Gastrocnemius medialis (tissue), 4 donors: ENCODE measurements at regions of chr17 and their contacts with region 1.

Region 1: DNA sequence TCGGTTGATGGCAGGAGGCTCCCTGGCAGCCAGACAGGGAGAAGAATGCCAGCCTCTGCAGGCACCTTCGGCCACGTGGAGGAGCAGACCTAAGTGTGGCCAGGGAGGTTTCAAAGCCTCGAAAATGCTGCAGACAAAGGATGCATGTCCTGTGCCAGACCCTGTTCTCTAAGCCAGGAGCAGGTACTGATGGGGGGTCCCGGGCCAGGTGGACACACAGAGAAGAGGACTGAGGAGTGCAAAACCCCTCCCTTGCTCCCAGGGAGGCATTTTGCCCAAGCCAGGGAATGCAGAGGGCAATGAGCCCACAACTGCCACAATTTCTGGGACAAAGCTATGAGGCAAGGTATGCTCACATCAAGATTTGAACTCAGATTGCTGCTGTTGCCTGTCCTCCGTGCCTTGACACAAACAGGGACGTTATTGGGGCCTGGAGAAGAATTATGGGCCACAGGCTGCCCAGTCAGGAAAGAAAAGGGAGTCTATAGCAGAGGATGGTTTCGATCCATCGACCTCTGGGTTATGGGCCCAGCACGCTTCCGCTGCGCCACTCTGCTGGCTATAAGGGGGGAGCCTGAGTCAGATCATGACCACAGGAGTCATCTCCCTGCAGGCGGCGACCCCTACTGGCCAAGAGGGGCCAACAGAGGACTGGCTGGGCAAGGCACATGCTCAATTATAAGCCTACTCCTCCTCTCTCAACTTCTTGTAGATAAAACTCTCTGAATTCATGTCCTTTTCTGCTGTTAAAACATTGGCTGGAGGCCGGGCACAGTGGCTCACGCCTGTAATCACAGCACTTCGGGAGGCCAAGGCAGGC is 25.1 kb upstream of the FOXK2 start:
- DNase-seq: peak; percentile 71 to 81
- ATAC-seq: peak; percentile 51 to 57
- H3K4me3 ChIP-seq: no peak overlapping the region
- H3K27ac ChIP-seq: peak overlapping the region; percentile 42 to 66 (median 54)
- H3K4me1 ChIP-seq: peaks cover 12 to 18% of the 10 kb centered on the region in 2 donors
- H3K27me3 ChIP-seq: no peaks in the 10 kb centered on the region
- CTCF ChIP-seq: peak; percentile 64 to 84 (median 76)
- POLR2A ChIP-seq: no peak

Region 2: GRCh38 chr17:82022981-82023374 is 471.5 kb before region 1 on chr17 and contains the start of gene LRRC45:
- in situ Hi-C with region 1: no loop called
- intact Hi-C with region 1: no loop called
- DNase-seq: peak; percentile 100
- ATAC-seq: peak; percentile 86 to 91
- H3K4me3 ChIP-seq: peak within 1 kb of the TSS; percentile 89 to 92 (median 92)
- H3K27ac ChIP-seq: peak within 1 kb of the TSS; percentile 78 to 86 (median 79)
- H3K4me1 ChIP-seq: peaks cover 25 to 55% of the 10 kb centered on the region in 2 donors
- H3K27me3 ChIP-seq: no peaks in the 10 kb centered on the region
- CTCF ChIP-seq: no peak
- POLR2A ChIP-seq: no peak
- total RNA-seq, gene LRRC45: 1.1 to 5.0 (median 3.8) TPM

Region 3: DNA sequence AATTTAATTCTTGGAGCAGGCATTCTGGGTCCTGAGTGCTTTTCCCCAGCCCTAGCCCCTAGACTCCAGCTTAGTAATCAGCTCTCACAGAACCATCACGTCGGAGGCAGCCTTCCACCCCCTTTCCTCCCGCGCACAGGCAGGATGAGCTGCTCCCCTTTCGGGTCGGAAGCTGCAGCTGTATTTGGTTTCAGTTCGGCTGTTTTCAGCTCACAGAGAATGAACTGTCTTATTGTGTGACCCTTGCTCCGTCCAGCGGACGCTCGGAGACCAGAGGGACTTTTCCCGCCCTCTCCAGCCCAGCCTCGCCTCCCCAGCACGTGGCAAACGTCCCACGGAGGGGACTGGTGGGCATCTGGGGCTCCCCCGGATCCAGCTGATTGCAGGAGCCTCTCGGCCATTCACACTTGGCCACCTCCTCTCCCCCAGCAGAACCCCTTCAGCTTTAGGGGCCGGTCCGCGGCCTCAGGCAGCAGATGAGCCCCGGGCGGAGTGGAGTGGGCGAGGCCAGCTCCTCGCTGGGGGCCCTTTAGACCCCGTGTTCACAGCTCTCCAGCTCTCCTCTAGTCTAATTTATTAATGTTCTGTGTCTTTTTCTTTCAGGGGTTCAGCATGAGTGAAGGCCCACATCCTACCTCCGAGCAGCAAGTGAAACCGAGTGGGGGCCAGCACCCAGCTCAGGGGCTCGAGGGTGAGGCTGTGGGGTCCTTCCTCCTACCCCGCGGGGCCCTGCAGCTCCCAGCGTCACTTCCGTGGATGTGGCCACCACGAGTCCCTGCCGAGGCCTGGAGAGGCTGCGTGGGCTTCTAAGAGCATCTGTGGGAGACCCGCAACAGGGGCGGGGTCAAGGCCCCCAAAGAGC is 123.7 kb before region 1 on chr17:
- in situ Hi-C with region 1: no loop called
- intact Hi-C with region 1: no loop called
- DNase-seq: no peak
- ATAC-seq: no peak
- H3K4me3 ChIP-seq: peak overlapping the region; percentile 33 to 57 (median 42)
- H3K27ac ChIP-seq: no peak overlapping the region
- H3K4me1 ChIP-seq: peaks cover 11 to 17% of the 10 kb centered on the region in 2 donors
- H3K27me3 ChIP-seq: peaks cover 36 to 45% (median 38%) of the 10 kb centered on the region in 3 donors
- CTCF ChIP-seq: no peak
- POLR2A ChIP-seq: no peak

Region 4: GRCh38 chr17:82418001-82418986 is 76.2 kb before region 1 on chr17 and contains the starts of genes HEXD and OGFOD3:
- in situ Hi-C with region 1: no loop called
- intact Hi-C with region 1: loop called (anchors 1 kb)
- DNase-seq: peak; percentile 57 to 68
- ATAC-seq: peak; percentile 92 to 93
- H3K4me3 ChIP-seq: peak within 1 kb of the TSS; percentile 71 to 95 (median 83)
- H3K27ac ChIP-seq: peak within 1 kb of the TSS; percentile 85 to 99 (median 97)
- H3K4me1 ChIP-seq: peaks cover 16 to 19% of the 10 kb centered on the region in 2 donors
- H3K27me3 ChIP-seq: no peaks in the 10 kb centered on the region
- CTCF ChIP-seq: peak in 3 of 5 experiments; percentile 10 to 33 (median 15)
- POLR2A ChIP-seq: peak; percentile 54 to 70
- total RNA-seq, gene HEXD: 15.5 to 35.1 (median 22.5) TPM
- total RNA-seq, gene OGFOD3: 25.8 to 72.1 (median 27.7) TPM

Region 5: GRCh38 chr17:82457997-82458864 is 36.2 kb before region 1 on chr17 and contains the start of gene NARF:
- in situ Hi-C with region 1: no loop called
- intact Hi-C with region 1: loop called (anchors 1 kb)
- DNase-seq: peak; percentile 99
- ATAC-seq: peak; percentile 92 to 94
- H3K4me3 ChIP-seq: peak within 1 kb of the TSS; percentile 75 to 98 (median 80)
- H3K27ac ChIP-seq: peak within 1 kb of the TSS; percentile 99 to 100 (median 100)
- H3K4me1 ChIP-seq: peaks cover 16 to 21% of the 10 kb centered on the region in 2 donors
- H3K27me3 ChIP-seq: no peaks in the 10 kb centered on the region
- CTCF ChIP-seq: no peak
- POLR2A ChIP-seq: peak; percentile 99 to 100
- total RNA-seq, gene NARF: 29.6 to 63.4 (median 49.0) TPM

Region 6: DNA sequence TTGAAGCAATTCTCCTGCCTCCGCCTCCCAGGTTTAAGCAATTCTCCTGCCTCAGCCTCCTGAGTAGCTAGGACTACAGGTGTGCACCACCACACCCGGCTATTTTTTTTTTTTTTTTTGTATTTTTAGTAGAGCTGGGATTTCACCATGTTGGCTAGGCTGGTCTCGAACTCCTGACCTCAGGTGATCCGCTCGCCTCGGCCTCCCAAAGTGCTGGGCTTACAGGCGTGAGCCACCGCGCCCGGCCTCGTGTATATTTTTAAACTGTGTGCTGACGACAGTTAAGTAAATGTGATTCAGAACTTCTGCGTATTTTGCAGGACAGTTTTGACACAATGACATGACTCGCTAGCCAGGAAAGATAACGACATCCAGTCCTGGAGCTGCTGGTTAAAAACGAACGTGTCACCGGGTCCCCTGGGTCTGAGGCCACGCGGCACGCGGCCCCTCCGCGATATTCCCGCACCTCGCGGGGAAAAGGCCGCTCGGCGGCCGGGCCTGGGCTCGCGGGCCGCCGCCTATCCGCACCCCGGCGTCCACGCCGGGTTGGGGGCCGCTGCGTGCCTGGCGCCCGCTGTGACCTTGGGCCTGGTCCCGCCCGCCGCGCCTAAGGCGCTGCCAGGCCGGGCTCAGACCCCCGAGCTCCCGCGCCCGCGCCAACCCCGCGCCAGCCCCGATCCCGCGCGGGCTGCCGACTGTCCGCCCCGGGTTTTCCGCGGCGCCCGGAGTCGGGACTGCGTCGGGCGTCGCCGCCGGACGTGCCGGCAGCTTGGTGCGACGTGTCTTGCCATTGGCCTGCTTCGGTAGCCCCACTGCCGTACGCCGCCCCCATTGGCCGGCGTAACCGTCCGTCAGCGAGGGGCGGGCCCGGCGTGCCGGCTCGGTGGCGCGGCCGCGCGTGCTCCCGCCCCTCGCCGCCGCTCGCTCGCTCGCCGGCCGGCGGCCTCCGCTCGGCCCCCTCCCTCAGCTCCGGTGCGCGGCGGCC is 24.7 kb after region 1 on chr17 and contains the start of gene FOXK2:
- in situ Hi-C with region 1: no loop called
- intact Hi-C with region 1: loop called (anchors 1 kb)
- DNase-seq: peak; percentile 92 to 95
- ATAC-seq: peak; percentile 94 to 95
- H3K4me3 ChIP-seq: peak within 1 kb of the TSS; percentile 63 to 84 (median 73)
- H3K27ac ChIP-seq: peak within 1 kb of the TSS; percentile 85 to 97 (median 90)
- H3K4me1 ChIP-seq: peaks cover 21 to 23% of the 10 kb centered on the region in 2 donors
- H3K27me3 ChIP-seq: no peaks in the 10 kb centered on the region
- CTCF ChIP-seq: peak in 4 of 5 experiments; percentile 7 to 54 (median 26)
- POLR2A ChIP-seq: peak; percentile 93 to 95
- total RNA-seq, gene FOXK2: 70.7 to 109 (median 85.0) TPM

Region 7: GRCh38 chr17:82639628-82640027 is 145.2 kb after region 1 on chr17:
- in situ Hi-C with region 1: no loop called
- intact Hi-C with region 1: loop called (anchors 2 kb)
- DNase-seq: no peak
- ATAC-seq: no peak
- H3K4me3 ChIP-seq: no peak overlapping the region
- H3K27ac ChIP-seq: no peak overlapping the region
- H3K4me1 ChIP-seq: peaks cover 0 to 11% of the 10 kb centered on the region in 2 donors
- H3K27me3 ChIP-seq: no peaks in the 10 kb centered on the region
- CTCF ChIP-seq: no peak
- POLR2A ChIP-seq: no peak

Region 8: GRCh38 chr17:82649501-82650261 is 155.2 kb after region 1 on chr17:
- in situ Hi-C with region 1: no loop called
- intact Hi-C with region 1: no loop called
- DNase-seq: no peak
- ATAC-seq: no peak
- H3K4me3 ChIP-seq: no peak overlapping the region
- H3K27ac ChIP-seq: peak overlapping the region in 3 of 4 donors; percentile 83 to 92 (median 86)
- H3K4me1 ChIP-seq: peaks cover 31 to 32% of the 10 kb centered on the region in 2 donors
- H3K27me3 ChIP-seq: no peaks in the 10 kb centered on the region
- CTCF ChIP-seq: no peak
- POLR2A ChIP-seq: no peak